Activated T-helper 1 cell treated with anti-CD3 and anti-CD28 coated beads, Interleukin-12 subunit alpha, Interleukin-12 subunit beta, Interleukin-2, Interleukin-4 antibody, amounts not matched to agents 30 ng/mL and 10 ng/mL and 1 ng/mL, durations not matched to agents 14 hours and 24 hours and 36 hours (primary cell): ENCODE measurements at regions of chr19 and their contacts with region 1.

Region 1: GRCh38 chr19:18919086-18919899 is at the starts of genes COPE and DDX49:
- DNase-seq: peak; percentile 97
- H3K4me3 Mint-ChIP-seq: peak within 1 kb of the TSS; percentile 94
- H3K27ac Mint-ChIP-seq: peak within 1 kb of the TSS; percentile 84
- H3K4me1 Mint-ChIP-seq: peaks cover 21% of the 10 kb centered on the region
- H3K27me3 Mint-ChIP-seq: no peaks in the 10 kb centered on the region
- total RNA-seq, gene COPE: 221 and 229 TPM in 2 replicates
- total RNA-seq, gene DDX49: 101 and 114 TPM in 2 replicates

Region 2: GRCh38 chr19:18281082-18282020 is 637.9 kb before region 1 on chr19 and contains the start of gene JUND:
- intact Hi-C with region 1: loop called (anchors 5 kb)
- DNase-seq: peak; percentile 98
- H3K4me3 Mint-ChIP-seq: peak within 1 kb of the TSS; percentile 88
- H3K27ac Mint-ChIP-seq: peak within 1 kb of the TSS; percentile 98
- H3K4me1 Mint-ChIP-seq: peaks cover 49% of the 10 kb centered on the region
- H3K27me3 Mint-ChIP-seq: no peaks in the 10 kb centered on the region
- total RNA-seq, gene JUND: 431 and 455 TPM in 2 replicates

Region 3: GRCh38 chr19:18571564-18572300 is 347.6 kb before region 1 on chr19 and contains the start of gene UBA52:
- intact Hi-C with region 1: loop called (anchors 1 kb)
- DNase-seq: peak; percentile 99
- H3K4me3 Mint-ChIP-seq: peak within 1 kb of the TSS; percentile 91
- H3K27ac Mint-ChIP-seq: peak within 1 kb of the TSS; percentile 98
- H3K4me1 Mint-ChIP-seq: peaks cover 27% of the 10 kb centered on the region
- H3K27me3 Mint-ChIP-seq: no peaks in the 10 kb centered on the region
- total RNA-seq, gene UBA52: 1,472 and 1,500 TPM in 2 replicates

Region 4: DNA sequence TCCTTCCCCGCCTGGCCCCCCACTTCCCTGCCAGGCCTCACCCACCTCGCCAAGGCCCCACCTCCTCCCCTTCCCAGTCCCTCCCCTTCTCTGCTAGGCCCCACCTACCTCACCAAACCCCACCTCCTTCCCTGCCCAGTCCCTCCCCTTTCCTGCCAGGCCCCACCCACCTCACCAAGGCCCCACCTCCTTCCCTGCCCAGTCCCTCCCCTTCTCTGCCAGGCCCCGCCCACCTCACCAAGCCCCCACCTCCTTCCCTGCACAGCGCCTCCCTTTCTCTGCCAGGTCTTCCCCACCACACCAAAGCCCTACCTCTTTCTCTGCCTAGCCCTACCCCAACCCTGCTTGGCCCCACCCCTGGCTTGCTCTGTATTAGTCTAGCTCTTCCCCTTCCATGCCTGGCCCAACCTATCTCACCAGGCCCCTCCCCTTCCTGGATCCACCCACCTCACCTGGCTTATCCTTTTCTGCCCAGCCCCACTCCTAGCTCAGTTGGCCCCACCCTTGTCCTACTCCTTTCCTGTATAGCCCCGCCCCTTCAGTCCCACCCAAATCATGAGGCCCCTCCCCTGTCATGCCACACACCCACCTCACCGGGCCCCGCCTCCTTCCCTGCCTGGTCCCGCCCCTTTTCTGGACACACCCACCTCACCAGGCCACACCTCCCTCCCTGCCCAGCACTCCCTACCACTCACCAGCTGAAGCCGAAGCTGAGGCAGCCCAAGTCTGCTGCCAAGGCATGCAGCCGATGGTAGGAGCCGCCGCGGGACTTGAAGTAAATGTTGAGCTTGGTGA is 39.5 kb before region 1 on chr19:
- intact Hi-C with region 1: no loop called
- DNase-seq: peak; percentile 5
- H3K4me3 Mint-ChIP-seq: no peak overlapping the region
- H3K27ac Mint-ChIP-seq: no peak overlapping the region
- H3K4me1 Mint-ChIP-seq: no peaks in the 10 kb centered on the region
- H3K27me3 Mint-ChIP-seq: no peaks in the 10 kb centered on the region

Region 5: GRCh38 chr19:18932216-18932841 is 13.0 kb after region 1 on chr19:
- intact Hi-C with region 1: loop called (anchors 1 kb)
- DNase-seq: peak; percentile 67
- H3K4me3 Mint-ChIP-seq: peak overlapping the region; percentile 73
- H3K27ac Mint-ChIP-seq: no peak overlapping the region
- H3K4me1 Mint-ChIP-seq: peaks cover 5% of the 10 kb centered on the region
- H3K27me3 Mint-ChIP-seq: peaks cover 8% of the 10 kb centered on the region

Region 6: DNA sequence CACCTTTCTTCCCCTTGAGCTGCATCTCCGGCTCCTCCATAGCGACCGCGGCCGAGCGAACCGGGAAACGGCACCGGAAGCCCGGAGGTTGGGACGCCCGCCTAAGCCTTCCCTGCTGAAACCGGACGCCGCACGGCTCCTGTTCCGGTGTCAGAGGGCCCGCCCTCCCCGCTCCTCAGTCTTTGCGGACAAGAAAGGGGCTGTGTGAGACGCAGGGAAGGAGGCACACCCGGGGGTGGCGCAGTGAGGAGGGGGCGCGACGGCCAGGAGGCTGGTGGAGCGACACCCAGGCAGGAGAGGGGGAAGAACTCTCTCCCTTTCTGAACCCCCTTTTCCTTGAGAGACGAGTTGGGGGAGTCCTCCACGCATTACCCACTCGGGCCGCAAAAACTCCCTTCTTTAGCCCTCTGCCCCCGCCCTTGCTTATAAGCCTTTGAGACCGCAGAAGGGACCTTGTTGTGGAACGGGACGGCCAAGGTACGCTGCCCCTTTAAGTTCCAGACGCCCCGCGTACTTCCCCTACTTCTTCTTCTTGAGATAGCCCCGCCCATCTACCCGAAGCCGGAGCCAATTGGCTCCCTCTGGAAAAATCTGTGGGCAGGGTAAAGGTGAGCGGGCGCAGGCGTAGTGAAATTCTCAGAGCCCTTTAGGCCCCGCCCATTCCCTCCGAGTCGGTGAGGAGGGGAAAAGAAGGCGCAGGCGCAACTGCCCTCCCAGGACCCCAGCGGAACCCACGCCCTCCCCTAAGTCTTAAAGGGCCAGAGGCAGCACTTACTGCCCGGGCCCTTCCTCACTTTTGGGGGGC is 273.0 kb after region 1 on chr19 and contains the starts of genes BORCS8 and RFXANK:
- intact Hi-C with region 1: loop called (anchors 2 kb)
- DNase-seq: peak; percentile 99
- H3K4me3 Mint-ChIP-seq: peak within 1 kb of the TSS; percentile 96
- H3K27ac Mint-ChIP-seq: peak within 1 kb of the TSS; percentile 99
- H3K4me1 Mint-ChIP-seq: peaks cover 20% of the 10 kb centered on the region
- H3K27me3 Mint-ChIP-seq: no peaks in the 10 kb centered on the region
- total RNA-seq, gene BORCS8: 37.8 and 38.6 TPM in 2 replicates
- total RNA-seq, gene RFXANK: 101 and 103 TPM in 2 replicates